ENCODE measurements at regions of chr11 and their contacts with region 1.

Region 1: DNA sequence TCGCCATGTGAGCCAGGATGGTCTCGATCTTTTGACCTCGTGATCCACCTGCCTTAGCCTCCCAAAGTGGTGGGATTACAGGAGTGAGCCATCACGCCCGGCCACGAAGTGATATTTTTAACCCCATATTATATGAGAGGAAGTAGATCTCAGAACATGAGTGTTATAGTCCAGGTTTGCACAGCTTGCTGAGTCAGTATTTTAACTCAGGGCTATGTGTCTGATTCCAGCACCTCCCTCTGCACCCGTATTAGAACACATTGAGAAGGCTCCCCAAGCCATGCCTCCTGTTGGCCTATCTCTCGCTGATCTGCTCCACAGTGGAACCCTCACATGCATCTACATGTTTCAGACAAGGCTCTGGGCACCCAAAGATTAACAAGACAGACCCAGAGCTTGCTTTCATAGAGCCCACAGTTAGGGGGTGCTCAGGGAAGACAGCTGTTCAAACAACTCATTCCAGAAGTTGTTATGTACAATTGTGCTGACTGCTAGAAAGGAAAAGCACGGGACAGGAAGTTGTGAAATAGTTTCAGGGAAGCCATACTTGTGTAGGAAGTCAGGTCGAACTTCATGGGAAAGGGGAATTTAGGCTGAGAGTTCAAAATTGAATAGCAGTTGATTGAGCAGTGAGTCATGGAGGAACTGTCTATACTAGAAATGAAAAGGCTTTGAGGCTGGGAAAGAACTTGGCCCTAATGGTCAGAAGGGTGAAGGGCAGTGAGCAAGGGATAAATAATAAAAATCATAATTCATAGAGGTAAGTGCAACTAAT is 49.3 kb upstream of the CLPB start:
- ATAC-seq: peak in 2 of 8 experiments; percentile 28 to 53
- H3K4me3 ChIP-seq: no peak overlapping the region
- H3K27ac ChIP-seq: no peak overlapping the region
- H3K4me1 ChIP-seq: no peaks in the 10 kb centered on the region

Region 2: DNA sequence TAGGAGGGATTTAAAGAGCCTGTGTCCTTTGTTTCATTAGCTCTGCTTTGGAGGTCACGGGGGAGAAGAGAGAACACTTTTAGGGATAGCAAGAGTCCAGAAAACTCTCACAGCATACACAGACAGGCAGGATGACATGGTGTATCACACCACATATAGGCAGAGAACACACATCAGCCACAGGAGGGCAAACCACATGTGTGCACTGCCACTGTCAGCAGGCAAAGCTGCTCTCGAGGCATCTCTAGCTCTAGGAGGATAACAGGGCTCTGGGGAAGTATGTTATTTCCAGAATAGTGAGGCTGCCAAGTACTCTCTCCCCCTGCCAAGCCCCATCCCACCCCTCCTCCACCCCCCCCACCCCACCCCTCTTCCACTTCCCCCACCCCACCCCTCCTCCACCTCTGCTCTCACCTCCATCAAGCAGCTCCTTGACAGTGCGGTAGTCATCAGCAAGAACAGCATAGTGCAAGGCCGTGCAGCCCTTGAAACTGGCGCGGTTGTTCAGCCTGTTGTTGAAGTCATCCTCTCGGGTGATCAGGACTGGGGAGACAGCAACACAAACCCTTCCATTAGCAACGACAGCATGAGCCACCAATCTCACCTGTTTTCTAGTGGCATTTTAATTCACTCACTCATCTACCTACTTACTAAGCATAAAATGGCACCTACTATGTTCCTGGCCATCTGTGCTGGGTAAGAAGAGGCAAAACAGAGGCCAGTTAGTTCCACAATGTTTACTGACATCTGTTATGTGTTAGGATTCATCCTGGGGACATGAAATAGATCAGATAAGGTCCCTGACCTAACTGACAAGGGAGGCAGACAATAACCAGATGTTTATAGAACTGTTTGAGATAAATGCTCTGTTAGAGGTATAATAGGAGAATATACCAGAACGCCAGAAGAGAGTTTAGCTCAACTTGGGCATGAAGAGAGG is 124.9 kb before region 1 on chr11:
- in situ Hi-C with region 1: no loop called
- ATAC-seq: peak in 5 of 8 experiments; percentile 33 to 83 (median 38)
- H3K4me3 ChIP-seq: no peak overlapping the region
- H3K27ac ChIP-seq: no peak overlapping the region
- H3K4me1 ChIP-seq: peaks cover 18 to 21% of the 10 kb centered on the region in 2 donors

Region 3: GRCh38 chr11:72573072-72573854 is 89.7 kb after region 1 on chr11:
- in situ Hi-C with region 1: loop called in 2 of 9 experiments (anchors 5 to 10 kb)
- ATAC-seq: peak; percentile 40 to 84 (median 68)
- H3K4me3 ChIP-seq: no peak overlapping the region
- H3K27ac ChIP-seq: no peak overlapping the region
- H3K4me1 ChIP-seq: peaks cover 0 to 14% of the 10 kb centered on the region in 2 donors

Region 4: DNA sequence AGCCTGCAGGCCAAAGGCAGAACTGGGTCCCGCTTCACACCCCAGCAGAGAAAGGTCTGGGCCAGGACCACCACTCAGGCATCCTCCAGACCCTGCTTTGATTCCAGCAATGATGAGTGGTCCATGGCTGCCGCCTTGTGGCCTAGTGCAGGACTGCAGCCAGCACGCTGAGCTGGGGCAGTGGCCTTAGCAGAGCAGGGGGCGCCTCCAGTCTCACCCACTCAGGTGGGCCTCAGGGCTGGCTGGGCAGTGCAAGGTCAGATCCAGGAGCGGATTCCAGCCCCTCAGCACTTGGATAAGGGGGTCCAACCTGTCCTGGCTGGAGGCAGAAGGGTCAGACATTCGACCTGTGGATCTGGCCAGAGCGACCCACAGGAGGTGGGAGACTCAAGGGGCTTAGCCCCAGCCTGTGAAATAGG is 200.2 kb after region 1 on chr11:
- in situ Hi-C with region 1: loop called in 2 of 9 experiments (anchors 10 to 25 kb)
- ATAC-seq: peak; percentile 2 to 75 (median 68)
- H3K4me3 ChIP-seq: no peak overlapping the region
- H3K27ac ChIP-seq: no peak overlapping the region
- H3K4me1 ChIP-seq: peaks cover 14 to 25% of the 10 kb centered on the region in 2 donors

Measured in motor neuron (in vitro differentiated cells).